Activated CD4-positive, alpha-beta T cell treated with anti-CD3 and anti-CD28 coated beads for 36 hours (primary cell): ENCODE measurements at regions of chr9 and their contacts with region 1.

Region 1: DNA sequence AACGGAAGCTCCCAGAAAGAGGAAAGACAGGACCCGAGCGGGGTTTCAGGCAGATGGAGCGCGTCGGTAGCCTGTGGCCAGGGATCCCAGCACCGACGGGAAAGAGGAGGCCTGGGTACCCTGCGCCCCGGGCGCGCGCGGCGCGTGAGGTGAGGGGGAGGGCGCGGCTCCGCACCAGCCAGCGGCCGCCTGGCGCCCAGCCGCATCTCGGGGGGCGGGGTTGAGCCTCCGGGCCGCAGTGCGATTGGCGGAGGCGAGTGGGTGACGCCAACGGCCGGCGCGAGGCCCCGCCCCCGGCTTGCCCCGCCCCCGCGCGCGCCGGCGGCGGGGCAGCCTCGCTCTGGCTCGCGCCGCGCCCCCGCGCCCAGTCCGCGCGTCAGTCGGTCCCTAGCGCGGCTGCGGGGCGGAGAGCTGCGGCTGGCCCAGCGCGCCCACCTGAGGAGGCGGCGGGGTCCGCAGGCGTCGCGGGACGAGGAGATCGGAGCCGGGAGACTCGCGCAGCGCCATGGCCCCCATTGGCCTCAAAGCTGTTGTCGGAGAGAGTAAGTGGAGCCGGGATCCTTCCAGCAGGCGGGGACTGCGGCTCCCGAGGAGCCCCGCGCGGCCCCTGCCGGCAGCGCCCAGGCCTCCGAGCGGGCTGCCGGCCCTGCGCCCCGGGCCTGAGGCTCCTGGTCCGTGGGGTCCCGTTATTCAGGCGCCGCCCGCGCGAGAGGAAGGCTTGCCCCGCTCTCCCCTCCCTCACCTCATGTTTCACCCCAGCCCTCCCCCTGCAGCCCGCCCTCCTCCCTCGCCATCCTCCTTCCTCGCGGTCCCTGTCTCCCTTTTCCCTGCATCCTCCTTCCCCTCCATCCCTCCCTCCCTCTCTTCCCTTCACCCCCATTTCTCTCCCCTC is at the start of gene STXBP1:
- DNase-seq: peak; percentile 92
- ATAC-seq: peak; percentile 87
- H3K4me3 Mint-ChIP-seq: peak within 1 kb of the TSS; percentile 85
- H3K27ac Mint-ChIP-seq: peak within 1 kb of the TSS; percentile 71
- H3K4me1 Mint-ChIP-seq: peaks cover 26% of the 10 kb centered on the region
- H3K27me3 Mint-ChIP-seq: peaks cover 32% of the 10 kb centered on the region
- total RNA-seq, gene STXBP1: 15.9 to 18.1 TPM

Region 2: DNA sequence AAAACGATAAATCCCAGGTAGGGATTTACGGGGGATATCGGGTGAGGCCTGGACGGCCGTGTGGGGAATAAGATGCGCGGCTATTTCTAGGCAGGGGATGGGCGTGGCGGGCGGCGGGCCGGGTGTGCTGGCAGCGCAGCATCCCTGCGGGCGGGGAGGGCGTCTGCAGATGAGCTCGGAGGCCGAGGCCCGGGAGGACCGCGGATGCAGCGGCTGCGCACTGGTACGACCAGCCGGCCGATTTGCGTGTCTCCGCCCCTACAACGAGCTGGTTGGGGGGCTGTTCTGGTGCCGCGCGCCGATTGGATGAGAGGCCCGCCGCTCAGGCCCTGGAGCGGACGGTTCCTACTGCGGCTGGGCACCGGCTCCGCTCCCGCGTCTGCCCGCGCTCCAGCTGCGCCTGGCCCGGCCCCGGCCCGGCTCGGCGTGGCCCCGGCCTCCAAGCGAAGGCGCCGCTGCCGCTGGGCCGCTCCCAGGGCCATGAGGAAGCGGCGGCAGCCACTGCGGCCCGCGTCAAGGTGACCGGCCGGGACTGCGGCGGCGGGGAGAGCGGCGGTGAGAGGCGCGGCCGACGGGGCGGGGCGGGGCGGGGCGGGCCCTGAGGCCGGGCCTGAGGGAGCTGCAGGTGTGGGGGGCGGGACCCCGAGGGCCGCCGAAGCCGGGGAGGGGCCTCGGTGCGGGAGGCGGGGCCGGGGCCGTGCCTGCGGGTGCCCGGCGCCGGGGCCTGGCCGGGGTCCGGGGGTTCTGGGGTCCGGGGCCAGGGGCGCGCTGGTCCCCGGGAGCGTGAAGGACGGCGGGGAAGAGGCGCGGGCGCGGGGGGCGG is 697.5 kb before region 1 on chr9 and contains the start of gene RALGPS1:
- CTCF ChIA-PET with region 1: no interaction called
- POLR2A ChIA-PET with region 1: no interaction called
- intact Hi-C with region 1: loop called in 1 of 2 experiments (anchors 1 kb)
- DNase-seq: peak; percentile 95
- ATAC-seq: peak; percentile 100
- H3K4me3 Mint-ChIP-seq: peak within 1 kb of the TSS; percentile 70
- H3K27ac Mint-ChIP-seq: no peak within 1 kb of the TSS
- H3K4me1 Mint-ChIP-seq: peaks cover 3% of the 10 kb centered on the region
- H3K27me3 Mint-ChIP-seq: peaks cover 14% of the 10 kb centered on the region
- total RNA-seq, gene RALGPS1: 1.2 to 2.2 TPM

Region 3: DNA sequence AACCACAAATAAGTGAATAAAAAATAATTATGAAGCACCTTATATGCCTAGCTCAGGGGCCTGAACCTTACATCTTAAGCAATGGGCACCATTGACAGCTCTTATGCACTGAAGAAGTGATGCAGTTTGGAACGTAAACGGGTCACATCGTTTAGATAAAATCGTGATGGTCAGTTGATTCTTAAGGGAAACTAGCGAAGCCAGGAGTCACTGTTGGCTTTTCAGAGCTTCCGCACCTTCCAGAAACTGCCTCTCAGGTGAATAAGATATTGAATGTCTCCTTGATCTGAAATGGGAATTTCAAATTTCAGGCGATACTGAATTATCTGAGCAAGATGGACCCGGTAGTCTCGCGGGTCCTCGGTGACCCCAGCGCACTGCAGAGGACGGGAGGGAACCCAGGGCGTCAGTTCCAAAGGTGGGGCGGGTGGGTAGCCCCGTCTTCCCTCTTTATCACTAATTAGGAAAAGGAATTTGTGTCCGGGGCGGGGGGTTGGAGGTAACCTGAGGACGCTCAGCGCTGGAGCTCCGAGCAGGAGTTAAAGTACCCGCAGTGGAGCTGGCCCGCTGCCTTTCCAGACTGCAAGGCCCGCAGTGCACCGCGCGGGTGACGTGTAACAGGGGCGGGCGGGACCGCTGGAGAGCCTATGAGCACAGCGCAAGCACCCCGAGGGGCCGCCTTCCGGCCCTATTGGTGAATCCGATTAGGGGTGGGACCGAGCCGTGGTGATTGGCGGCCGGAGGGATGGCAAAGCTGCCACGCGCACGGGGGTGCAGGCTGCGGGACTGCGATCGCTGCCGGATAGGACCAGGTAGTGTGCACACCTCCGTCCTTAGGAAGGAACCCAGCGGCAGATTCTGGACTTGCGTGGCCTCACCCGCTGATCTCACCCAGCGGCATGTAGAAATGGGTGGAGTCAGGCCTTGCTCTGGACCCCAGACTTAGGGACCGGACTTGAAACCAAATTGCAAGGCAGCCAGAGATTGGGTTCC is 367.2 kb before region 1 on chr9:
- CTCF ChIA-PET with region 1: no interaction called
- POLR2A ChIA-PET with region 1: no interaction called
- intact Hi-C with region 1: loop called in 1 of 2 experiments (anchors 1 kb)
- DNase-seq: peak; percentile 98
- ATAC-seq: peak; percentile 100
- H3K4me3 Mint-ChIP-seq: peak overlapping the region; percentile 78
- H3K27ac Mint-ChIP-seq: peak overlapping the region; percentile 59
- H3K4me1 Mint-ChIP-seq: peaks cover 6% of the 10 kb centered on the region
- H3K27me3 Mint-ChIP-seq: peaks cover 5% of the 10 kb centered on the region

Region 4: GRCh38 chr9:127568971-127569885 is 42.9 kb before region 1 on chr9:
- CTCF ChIA-PET with region 1: no interaction called
- POLR2A ChIA-PET with region 1: interaction called, 3 read pairs
- intact Hi-C with region 1: loop called in 1 of 2 experiments (anchors 1 kb)
- DNase-seq: peak; percentile 88
- ATAC-seq: peak; percentile 85
- H3K4me3 Mint-ChIP-seq: peak overlapping the region; percentile 71
- H3K27ac Mint-ChIP-seq: peak overlapping the region; percentile 38
- H3K4me1 Mint-ChIP-seq: peaks cover 26% of the 10 kb centered on the region
- H3K27me3 Mint-ChIP-seq: no peaks in the 10 kb centered on the region

Region 5: GRCh38 chr9:127715394-127716337 is 103.5 kb after region 1 on chr9 and contains the starts of genes PTRH1 and TTC16:
- CTCF ChIA-PET with region 1: no interaction called
- POLR2A ChIA-PET with region 1: interaction called, 3 read pairs
- intact Hi-C with region 1: loop called in 1 of 2 experiments (anchors 1 kb)
- DNase-seq: peak; percentile 99
- ATAC-seq: peak; percentile 97
- H3K4me3 Mint-ChIP-seq: peak within 1 kb of the TSS; percentile 92
- H3K27ac Mint-ChIP-seq: peak within 1 kb of the TSS; percentile 97
- H3K4me1 Mint-ChIP-seq: peaks cover 25% of the 10 kb centered on the region
- H3K27me3 Mint-ChIP-seq: no peaks in the 10 kb centered on the region
- total RNA-seq, gene PTRH1: 12.9 to 15.1 TPM
- total RNA-seq, gene TTC16: 0.16 to 0.30 TPM

Region 6: DNA sequence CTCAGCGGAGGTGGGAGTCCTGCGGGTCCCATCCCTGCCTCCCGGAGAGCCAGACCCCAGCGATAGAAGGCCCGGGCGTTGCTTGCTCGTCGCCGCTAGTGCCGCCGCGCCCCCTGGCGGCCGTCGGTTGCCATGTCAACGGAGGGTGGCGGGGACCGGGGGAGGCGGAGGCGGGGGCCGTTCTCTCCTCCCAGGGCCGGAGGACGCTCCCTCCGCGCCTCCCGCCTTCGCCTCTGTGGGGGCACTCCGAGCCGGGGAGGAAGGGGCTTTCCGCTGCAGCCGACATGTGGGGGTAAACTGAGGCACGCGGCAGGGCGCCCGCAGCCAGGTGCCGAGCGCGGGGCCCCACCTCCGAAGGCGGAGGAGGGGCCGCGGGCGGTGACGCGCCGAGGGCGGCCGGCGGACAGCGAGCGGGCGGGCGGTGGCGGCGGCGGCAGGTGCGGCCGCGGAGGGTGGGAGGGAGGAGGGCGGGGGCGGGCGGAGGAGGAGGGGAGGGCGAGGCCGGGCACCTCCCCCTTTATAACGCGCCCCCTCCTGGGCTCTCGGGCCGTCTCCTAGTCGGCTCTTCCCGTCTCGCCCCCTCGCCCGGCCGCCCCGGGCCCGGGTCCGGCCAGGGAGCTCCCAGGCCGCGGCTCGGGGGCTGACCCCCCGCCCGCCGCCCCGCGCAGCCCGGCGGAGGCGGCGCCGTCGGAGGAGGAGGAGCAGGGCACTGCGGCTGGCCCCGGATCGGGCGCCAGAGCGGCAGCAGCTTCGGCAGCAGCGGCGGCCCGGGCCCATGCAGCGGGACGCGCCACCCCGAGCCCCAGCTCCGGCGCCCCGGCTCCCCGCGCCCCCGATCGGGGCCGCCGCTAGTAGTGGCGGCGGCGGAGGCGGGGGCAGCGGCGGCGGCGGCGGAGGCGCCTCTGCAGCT is 173.1 kb after region 1 on chr9:
- CTCF ChIA-PET with region 1: no interaction called
- POLR2A ChIA-PET with region 1: no interaction called
- intact Hi-C with region 1: loop called in 1 of 2 experiments (anchors 5 kb)
- DNase-seq: peak; percentile 93
- ATAC-seq: peak; percentile 34
- H3K4me3 Mint-ChIP-seq: peak overlapping the region; percentile 97
- H3K27ac Mint-ChIP-seq: peak overlapping the region; percentile 97
- H3K4me1 Mint-ChIP-seq: peaks cover 74% of the 10 kb centered on the region
- H3K27me3 Mint-ChIP-seq: no peaks in the 10 kb centered on the region